CD4-positive, alpha-beta memory T cell (primary cell): ENCODE measurements at regions of chr11 and their contacts with region 1.

Region 1: GRCh38 chr11:14566331-14567063 is 46.3 kb upstream of the PSMA1 start:
- DNase-seq: no peak
- H3K4me3 ChIP-seq: no peak overlapping the region
- H3K4me3 Mint-ChIP-seq: peak overlapping the region in 3 of 8 donors; percentile 5 to 56 (median 8)
- H3K27ac ChIP-seq: no peak overlapping the region
- H3K27ac Mint-ChIP-seq: peak overlapping the region in 6 of 7 donors; percentile 37 to 89 (median 66)
- H3K4me1 ChIP-seq: peaks cover 54% of the 10 kb centered on the region
- H3K4me1 Mint-ChIP-seq: peaks cover 40 to 72% (median 56%) of the 10 kb centered on the region in 4 donors
- H3K27me3 ChIP-seq: no peaks in the 10 kb centered on the region
- H3K27me3 Mint-ChIP-seq: no peaks in the 10 kb centered on the region

Region 2: GRCh38 chr11:14398302-14398701 is 168.2 kb before region 1 on chr11:
- CTCF ChIA-PET with region 1: no interaction called
- POLR2A ChIA-PET with region 1: no interaction called
- intact Hi-C with region 1: no loop called
- DNase-seq: no peak
- H3K4me3 ChIP-seq: no peak overlapping the region
- H3K4me3 Mint-ChIP-seq: no peak overlapping the region
- H3K27ac ChIP-seq: no peak overlapping the region
- H3K27ac Mint-ChIP-seq: peak overlapping the region in 1 of 7 donors; percentile 61
- H3K4me1 ChIP-seq: peaks cover 6% of the 10 kb centered on the region
- H3K4me1 Mint-ChIP-seq: peaks cover 3 to 7% (median 5%) of the 10 kb centered on the region in 4 donors
- H3K27me3 ChIP-seq: no peaks in the 10 kb centered on the region
- H3K27me3 Mint-ChIP-seq: peaks cover 0 to 4% of the 10 kb centered on the region in 2 donors

Region 3: GRCh38 chr11:14529933-14530332 is 36.6 kb before region 1 on chr11:
- CTCF ChIA-PET with region 1: no interaction called
- POLR2A ChIA-PET with region 1: no interaction called
- intact Hi-C with region 1: no loop called
- DNase-seq: no peak
- H3K4me3 ChIP-seq: no peak overlapping the region
- H3K4me3 Mint-ChIP-seq: no peak overlapping the region
- H3K27ac ChIP-seq: no peak overlapping the region
- H3K27ac Mint-ChIP-seq: peak overlapping the region in 1 of 7 donors; percentile 7
- H3K4me1 ChIP-seq: no peaks in the 10 kb centered on the region
- H3K4me1 Mint-ChIP-seq: no peaks in the 10 kb centered on the region
- H3K27me3 ChIP-seq: no peaks in the 10 kb centered on the region
- H3K27me3 Mint-ChIP-seq: no peaks in the 10 kb centered on the region

Region 4: GRCh38 chr11:14554959-14555358 is 11.5 kb before region 1 on chr11:
- CTCF ChIA-PET with region 1: interaction called, 7 read pairs
- POLR2A ChIA-PET with region 1: interaction called, 11 read pairs
- intact Hi-C with region 1: loop called (anchors 2 kb)
- DNase-seq: peak; percentile 66 to 83 (median 78)
- H3K4me3 ChIP-seq: no peak overlapping the region
- H3K4me3 Mint-ChIP-seq: peak overlapping the region in 7 of 8 donors; percentile 12 to 84 (median 50)
- H3K27ac ChIP-seq: peak overlapping the region; percentile 37
- H3K27ac Mint-ChIP-seq: peak overlapping the region; percentile 79 to 97 (median 95)
- H3K4me1 ChIP-seq: peaks cover 27% of the 10 kb centered on the region
- H3K4me1 Mint-ChIP-seq: peaks cover 21 to 44% (median 27%) of the 10 kb centered on the region in 4 donors
- H3K27me3 ChIP-seq: no peaks in the 10 kb centered on the region
- H3K27me3 Mint-ChIP-seq: peaks cover 0 to 2% of the 10 kb centered on the region in 2 donors